ENCODE measurements at regions of chr3 and their contacts with region 1.

Region 1: DNA sequence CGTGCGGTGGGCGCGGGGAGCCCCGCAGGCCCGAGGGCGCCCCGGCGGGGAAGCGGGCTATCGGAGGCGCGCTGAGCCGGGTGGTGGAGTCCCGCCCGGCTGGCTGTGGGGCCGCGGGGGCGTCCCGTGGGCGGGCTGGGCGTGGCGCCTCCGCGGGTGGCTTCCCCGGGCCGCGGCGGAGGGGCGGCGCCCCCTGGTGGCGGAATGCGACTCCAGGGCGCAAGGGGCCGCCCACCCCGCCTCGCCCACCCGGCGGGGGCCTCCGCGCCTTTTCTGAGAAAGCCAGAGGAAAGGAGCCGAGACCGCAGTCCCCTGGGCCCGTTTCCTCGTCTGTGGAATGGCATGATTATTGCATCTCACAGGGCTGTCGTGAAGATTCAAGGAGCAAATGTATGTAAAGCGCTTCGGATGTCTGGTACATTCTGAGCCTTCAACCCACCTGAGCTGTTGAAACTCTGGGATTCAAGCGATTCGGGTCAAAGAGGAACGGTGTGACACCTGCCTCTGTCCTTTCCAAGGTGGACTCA is 31.9 kb upstream of the RAB6B start:
- DNase-seq: peak in 1 of 2 donors; percentile 74
- ATAC-seq: peak; percentile 67

Region 2: DNA sequence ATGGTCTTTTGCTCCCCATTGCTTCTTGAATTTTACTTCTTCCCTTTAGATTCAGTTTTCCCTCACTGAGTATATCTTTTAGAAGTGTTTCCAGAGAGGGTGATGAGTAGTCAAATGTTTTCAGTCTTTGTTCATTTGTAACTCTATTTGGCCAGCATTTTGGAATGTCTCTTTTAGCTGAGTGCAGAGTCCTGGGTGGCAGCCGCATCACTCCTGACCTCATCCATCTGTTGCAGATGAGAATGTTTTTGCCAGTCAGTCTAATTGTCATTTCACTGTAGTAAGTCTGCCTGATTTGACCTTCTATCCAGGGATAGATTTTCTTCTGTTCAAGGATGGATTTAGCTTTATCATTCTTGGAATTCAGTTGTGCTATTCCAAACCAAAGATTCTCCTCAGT is 114.7 kb before region 1 on chr3:
- intact Hi-C with region 1: loop called in 1 of 2 experiments (anchors 10 kb)
- DNase-seq: no peak
- ATAC-seq: no peak

Region 3: DNA sequence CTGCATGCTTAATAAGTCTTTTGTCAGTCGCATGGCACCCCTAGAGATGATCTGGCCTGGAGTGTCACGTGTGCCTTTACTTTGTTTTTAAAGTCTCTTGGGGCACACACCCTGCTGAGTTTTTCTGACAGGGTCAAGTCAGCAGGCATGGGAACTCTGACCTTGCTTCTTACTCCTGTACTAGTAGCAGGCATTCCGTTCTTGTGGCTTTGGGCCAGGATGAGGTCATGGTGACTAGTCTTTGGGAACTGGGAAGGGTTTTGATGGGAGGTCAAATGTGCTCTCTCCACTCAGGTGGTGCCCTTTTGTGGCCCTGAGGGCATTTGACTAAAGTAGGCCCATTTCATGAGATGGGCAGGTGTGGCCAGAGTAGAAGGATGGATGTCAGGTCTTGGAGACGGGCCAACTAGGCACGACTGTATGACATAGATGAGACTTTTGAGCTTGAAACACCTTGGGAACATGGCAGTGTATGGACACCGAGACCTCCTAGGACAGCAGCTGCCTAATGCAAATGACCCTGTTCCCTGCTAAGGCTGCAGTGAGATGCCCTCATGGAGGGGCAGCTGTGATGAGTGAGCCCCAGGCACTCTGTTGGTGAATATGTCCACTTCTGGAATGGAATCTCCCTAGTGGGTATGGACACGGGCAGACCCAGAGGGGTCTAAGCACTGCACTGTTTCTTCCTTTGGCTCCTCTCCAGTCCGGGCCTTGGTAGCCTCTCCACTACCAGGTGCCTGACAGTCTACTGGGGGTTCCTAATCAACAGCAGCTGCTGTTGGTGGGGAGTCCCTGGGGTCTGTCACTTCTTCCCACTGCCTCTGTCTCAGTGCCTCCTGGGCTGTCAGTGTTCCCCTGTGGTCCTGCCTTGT is 105.6 kb before region 1 on chr3:
- intact Hi-C with region 1: loop called (anchors 5 to 10 kb)
- DNase-seq: peak; percentile 22 to 36
- ATAC-seq: peak; percentile 43

Region 4: GRCh38 chr3:134299185-134299887 is 371.7 kb after region 1 on chr3:
- intact Hi-C with region 1: loop called in 1 of 2 experiments (anchors 5 kb)
- DNase-seq: peak in 1 of 2 donors; percentile 49
- ATAC-seq: peak; percentile 96

Measured in left colon (tissue), 2 donors.